Aorta (tissue), 5 donors: ENCODE measurements at regions of chr6 and their contacts with region 1.

Region 1: GRCh38 chr6:99520855-99521632 is 5.8 kb upstream of the USP45 start:
- DNase-seq: peak; percentile 90 to 93
- ATAC-seq: peak; percentile 98
- H3K4me3 ChIP-seq: peak overlapping the region; percentile 74 to 76
- H3K27ac ChIP-seq: peak overlapping the region; percentile 54 to 85
- H3K4me1 ChIP-seq: no peaks in the 10 kb centered on the region
- H3K27me3 ChIP-seq: no peaks in the 10 kb centered on the region

Region 2: GRCh38 chr6:99276747-99277146 is 244.3 kb before region 1 on chr6:
- intact Hi-C with region 1: no loop called
- DNase-seq: no peak
- ATAC-seq: no peak
- H3K4me3 ChIP-seq: no peak overlapping the region
- H3K27ac ChIP-seq: no peak overlapping the region
- H3K4me1 ChIP-seq: no peaks in the 10 kb centered on the region
- H3K27me3 ChIP-seq: no peaks in the 10 kb centered on the region

Region 3: DNA sequence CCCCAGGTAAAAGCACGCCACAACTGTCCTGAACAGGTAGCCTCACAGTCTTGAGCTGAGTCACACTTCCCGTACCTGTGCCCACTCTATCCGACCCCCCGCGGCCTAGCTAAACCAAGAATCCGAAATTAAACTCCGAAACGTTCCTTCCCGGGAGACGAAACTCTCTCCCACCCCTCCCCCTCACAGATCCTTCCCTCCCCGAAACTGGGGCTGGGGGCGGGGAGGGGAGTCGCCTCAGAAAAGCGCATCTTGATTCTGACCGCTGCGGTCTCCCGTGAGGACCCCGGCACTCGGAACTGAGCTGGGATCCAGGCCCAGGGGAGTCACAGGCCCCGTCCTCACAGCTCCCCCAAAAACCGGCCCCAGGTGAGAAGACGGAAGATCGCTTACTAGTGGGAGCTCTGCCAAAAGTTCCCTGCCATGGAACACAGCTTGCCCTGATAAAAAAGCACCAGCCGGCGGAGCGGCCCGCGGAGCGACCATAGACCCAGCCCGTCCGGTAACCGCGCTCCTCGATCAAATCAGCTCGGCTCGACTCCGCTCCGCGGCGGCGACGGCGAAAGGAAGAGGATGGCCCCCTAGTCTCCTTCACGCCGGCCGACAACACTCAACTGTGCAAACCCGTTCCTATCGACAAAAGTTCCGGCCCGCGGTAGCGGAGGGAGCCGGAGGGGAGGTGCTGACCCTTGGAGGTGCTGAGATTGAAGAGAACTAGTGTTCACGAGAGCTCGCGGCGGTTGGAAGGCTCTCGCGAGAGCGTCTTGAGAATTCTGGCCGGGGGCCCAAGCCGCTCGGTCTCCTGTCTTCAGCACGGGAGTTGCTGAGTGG is 47.3 kb after region 1 on chr6 and contains the start of gene CCNC:
- intact Hi-C with region 1: loop called (anchors 5 kb)
- DNase-seq: peak; percentile 96
- ATAC-seq: peak; percentile 100
- H3K4me3 ChIP-seq: peak within 1 kb of the TSS; percentile 78 to 83
- H3K27ac ChIP-seq: no peak within 1 kb of the TSS
- H3K4me1 ChIP-seq: no peaks in the 10 kb centered on the region
- H3K27me3 ChIP-seq: no peaks in the 10 kb centered on the region
- total RNA-seq, gene CCNC: 37.2 to 40.4 TPM